GM12878 (cell line): ENCODE measurements at regions of chr3 and their contacts with region 1.

Region 1: DNA sequence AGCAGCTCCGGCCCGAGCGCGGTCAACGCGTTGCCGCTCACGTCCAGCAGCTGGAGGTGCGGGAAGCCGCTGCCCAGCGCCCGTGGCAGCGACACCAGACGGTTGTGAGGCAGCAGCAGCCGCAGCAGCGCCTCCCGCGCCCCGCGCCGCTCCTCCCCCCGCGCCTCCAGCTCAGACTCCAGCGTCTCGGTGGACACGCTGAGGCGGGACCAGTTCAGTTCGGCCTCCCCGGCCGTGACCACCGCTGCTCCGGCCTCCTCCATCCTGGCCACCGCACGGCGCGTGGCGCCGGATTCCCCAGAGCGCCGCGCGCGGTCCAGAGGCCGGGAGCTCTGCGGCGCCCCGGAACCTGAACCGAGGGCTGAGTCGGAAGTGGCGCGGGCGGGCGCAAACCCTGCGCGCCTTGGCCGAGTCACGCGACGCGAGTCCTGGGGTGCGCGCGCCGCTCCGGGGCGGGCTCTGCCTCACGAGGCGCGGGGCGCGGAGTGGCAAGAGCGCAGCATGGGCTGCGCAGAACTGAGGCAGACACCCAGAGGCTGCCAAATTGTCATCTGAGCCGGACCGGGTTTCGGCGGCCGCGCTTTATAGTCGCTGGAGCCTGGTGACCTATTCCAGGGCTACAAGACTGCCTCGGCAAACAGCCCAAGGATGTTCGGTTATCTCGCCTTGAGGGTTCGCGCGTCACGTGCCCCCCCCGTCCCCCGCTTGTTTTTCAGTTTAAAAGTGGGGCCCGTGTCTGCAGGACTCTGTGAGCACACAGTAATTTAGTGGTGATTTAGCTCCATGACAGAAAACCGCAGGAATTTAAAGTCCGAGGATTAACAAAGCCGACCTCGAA is at the start of gene LRRC58:
- DNase-seq: peak; percentile 56
- ATAC-seq: peak; percentile 91
- H3K4me3 ChIP-seq: peak within 1 kb of the TSS; percentile 95
- H3K27ac ChIP-seq: peak within 1 kb of the TSS; percentile 86
- H3K4me1 ChIP-seq: peaks cover 7% of the 10 kb centered on the region; the same call in 1 of the 2 replicates
- H3K27me3 ChIP-seq: no peaks in the 10 kb centered on the region
- CTCF ChIP-seq: peak in 2 of 3 experiments; percentile 25 to 33; a peak in 3 of 6 replicates
- EP300 ChIP-seq: no peak
- POLR2A ChIP-seq: peak; percentile 97
- RAD21 ChIP-seq: no peak
- polyA plus RNA-seq, gene LRRC58: 7.7 to 8.0 TPM

Region 2: DNA sequence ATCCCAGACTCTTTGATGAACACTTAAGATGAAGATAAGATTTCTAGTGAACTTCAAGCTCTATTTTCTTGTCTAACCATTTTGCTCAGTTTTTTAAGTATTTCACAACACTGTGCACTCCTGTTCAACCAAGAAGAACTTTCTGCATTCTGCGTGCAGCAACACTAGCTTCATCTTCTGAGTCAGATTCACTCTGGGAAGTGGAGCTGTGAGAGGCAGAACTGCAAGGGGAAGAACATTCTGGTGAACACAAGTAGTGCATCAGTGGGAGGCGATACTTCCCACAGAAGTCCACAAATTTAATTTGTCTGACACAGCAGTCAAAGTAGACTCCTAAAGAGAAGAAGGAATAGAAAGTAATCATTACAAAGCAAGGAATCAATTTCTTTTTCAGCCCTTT is 18.1 kb before region 1 on chr3:
- CTCF ChIA-PET with region 1: interaction called, 3 read pairs
- POLR2A ChIA-PET with region 1: interaction called, 12 read pairs
- RAD21 ChIA-PET with region 1: interaction called, 4 read pairs
- SMC1A ChIA-PET with region 1: interaction called, 9 read pairs
- in situ Hi-C with region 1: no loop called
- intact Hi-C with region 1: no loop called
- DNase-seq: no peak
- ATAC-seq: no peak
- H3K4me3 ChIP-seq: no peak overlapping the region
- H3K27ac ChIP-seq: no peak overlapping the region
- H3K4me1 ChIP-seq: no peaks in the 10 kb centered on the region
- H3K27me3 ChIP-seq: no peaks in the 10 kb centered on the region
- CTCF ChIP-seq: no peak
- EP300 ChIP-seq: no peak
- POLR2A ChIP-seq: no peak
- RAD21 ChIP-seq: no peak